ENCODE measurements at regions of chr6 and their contacts with region 1.

Region 1: GRCh38 chr6:12011276-12012076 is 636 bp upstream of the HIVEP1 start:
- DNase-seq: peak; percentile 96
- H3K4me3 ChIP-seq: peak overlapping the region in 1 of 3 experiments; percentile 71
- H3K27ac ChIP-seq: peak overlapping the region; percentile 98
- H3K4me1 ChIP-seq: peaks cover 38% of the 10 kb centered on the region
- H3K27me3 ChIP-seq: no peaks in the 10 kb centered on the region
- CTCF ChIP-seq: no peak
- POLR2A ChIP-seq: peak; percentile 7

Region 2: GRCh38 chr6:11212625-11213024 is 798.9 kb before region 1 on chr6:
- CTCF ChIA-PET with region 1: no interaction called
- POLR2A ChIA-PET with region 1: no interaction called
- dilution Hi-C with region 1: no loop called
- intact Hi-C with region 1: loop called (anchors 10 kb)
- DNase-seq: peak; percentile 71
- H3K4me3 ChIP-seq: no peak overlapping the region
- H3K27ac ChIP-seq: peak overlapping the region; percentile 77
- H3K4me1 ChIP-seq: peaks cover 95% of the 10 kb centered on the region
- H3K27me3 ChIP-seq: no peaks in the 10 kb centered on the region
- CTCF ChIP-seq: no peak
- POLR2A ChIP-seq: no peak

Region 3: GRCh38 chr6:11609315-11610071 is 402.0 kb before region 1 on chr6:
- CTCF ChIA-PET with region 1: interaction called, 3 read pairs
- POLR2A ChIA-PET with region 1: interaction called, 10 read pairs
- dilution Hi-C with region 1: no loop called
- intact Hi-C with region 1: loop called (anchors 1 kb)
- DNase-seq: peak; percentile 99
- H3K4me3 ChIP-seq: peak overlapping the region in 2 of 3 experiments; percentile 30 to 86
- H3K27ac ChIP-seq: peak overlapping the region; percentile 99
- H3K4me1 ChIP-seq: peaks cover 78% of the 10 kb centered on the region
- H3K27me3 ChIP-seq: no peaks in the 10 kb centered on the region
- CTCF ChIP-seq: no peak
- POLR2A ChIP-seq: no peak

Region 4: DNA sequence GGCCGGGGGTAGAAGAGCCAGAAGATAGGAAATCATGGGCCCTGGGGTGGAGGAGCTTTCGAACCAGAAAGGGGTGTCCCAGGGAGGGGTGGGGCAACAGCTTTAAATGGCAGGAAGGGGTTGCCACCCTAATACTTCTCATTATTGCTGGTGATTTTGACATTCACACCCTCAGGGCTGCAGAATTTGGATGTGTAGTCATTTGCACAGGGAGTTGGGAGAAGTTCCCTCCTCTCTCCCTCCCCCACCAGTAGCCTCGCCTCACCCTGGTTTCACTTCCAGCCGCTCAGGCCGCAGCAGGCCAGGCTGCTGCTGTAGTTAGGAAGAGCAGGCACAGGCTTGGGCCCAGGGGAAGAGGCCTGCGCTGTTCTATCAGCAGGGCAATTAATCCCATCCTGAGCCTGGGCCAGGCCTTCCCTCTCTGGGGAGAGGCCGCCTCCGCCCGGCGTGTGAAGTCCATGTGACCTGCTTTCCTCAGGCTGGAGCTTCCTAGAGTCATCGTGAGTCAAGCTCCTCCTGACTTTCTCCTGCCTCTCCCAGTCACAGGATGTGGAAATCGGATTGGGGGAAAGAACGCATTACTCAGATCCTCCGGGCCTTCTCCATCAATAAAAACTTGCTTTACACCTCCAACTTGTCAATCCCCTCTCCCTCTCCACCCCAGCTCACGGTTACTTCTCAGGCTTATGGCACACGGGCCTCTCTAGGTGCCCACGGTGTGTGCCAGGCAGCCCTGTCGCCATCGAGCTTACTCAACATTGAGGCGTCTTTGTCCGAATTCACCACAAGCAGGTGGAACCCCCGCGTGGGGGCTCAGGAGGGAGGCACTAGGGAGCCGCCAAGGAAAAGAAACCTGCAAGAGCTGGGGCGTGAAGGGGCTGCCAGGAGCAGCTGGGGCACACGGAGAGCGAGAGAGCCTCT is 240.7 kb before region 1 on chr6:
- CTCF ChIA-PET with region 1: interaction called, 3 read pairs
- POLR2A ChIA-PET with region 1: interaction called, 3 read pairs
- dilution Hi-C with region 1: no loop called
- intact Hi-C with region 1: loop called (anchors 1 kb)
- DNase-seq: peak; percentile 93
- H3K4me3 ChIP-seq: no peak overlapping the region
- H3K27ac ChIP-seq: peak overlapping the region; percentile 94
- H3K4me1 ChIP-seq: peaks cover 58% of the 10 kb centered on the region
- H3K27me3 ChIP-seq: no peaks in the 10 kb centered on the region
- CTCF ChIP-seq: no peak
- POLR2A ChIP-seq: peak; percentile 84

Region 5: DNA sequence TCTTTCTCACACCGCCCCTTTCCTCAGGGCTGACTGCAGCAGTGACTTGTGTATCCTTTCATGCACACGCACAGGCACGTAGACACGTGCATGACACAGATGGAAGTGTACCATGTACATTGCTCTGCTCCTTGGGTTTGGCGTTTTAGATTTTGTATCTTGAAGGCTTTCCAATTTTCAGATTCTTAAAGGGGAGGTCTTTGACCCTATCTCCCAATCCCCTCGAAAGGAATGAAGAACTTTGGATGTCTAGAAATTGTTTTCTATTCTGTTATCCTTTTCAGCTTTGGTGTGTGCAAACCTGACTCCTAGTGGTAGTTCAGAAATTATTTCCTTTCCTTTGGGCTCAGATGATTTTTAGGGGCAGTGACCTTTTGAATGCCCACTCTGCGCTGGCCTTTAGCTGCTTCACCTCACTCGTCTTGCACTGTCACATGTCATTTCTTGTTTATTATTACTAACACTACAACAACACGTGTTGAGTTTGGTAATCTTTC is 63.6 kb after region 1 on chr6:
- CTCF ChIA-PET with region 1: interaction called, 12 read pairs
- POLR2A ChIA-PET with region 1: no interaction called
- dilution Hi-C with region 1: no loop called
- intact Hi-C with region 1: loop called (anchors 1 kb)
- DNase-seq: peak; percentile 34
- H3K4me3 ChIP-seq: no peak overlapping the region
- H3K27ac ChIP-seq: no peak overlapping the region
- H3K4me1 ChIP-seq: peaks cover 22% of the 10 kb centered on the region
- H3K27me3 ChIP-seq: no peaks in the 10 kb centered on the region
- CTCF ChIP-seq: peak; percentile 13 to 18
- POLR2A ChIP-seq: no peak

Region 6: DNA sequence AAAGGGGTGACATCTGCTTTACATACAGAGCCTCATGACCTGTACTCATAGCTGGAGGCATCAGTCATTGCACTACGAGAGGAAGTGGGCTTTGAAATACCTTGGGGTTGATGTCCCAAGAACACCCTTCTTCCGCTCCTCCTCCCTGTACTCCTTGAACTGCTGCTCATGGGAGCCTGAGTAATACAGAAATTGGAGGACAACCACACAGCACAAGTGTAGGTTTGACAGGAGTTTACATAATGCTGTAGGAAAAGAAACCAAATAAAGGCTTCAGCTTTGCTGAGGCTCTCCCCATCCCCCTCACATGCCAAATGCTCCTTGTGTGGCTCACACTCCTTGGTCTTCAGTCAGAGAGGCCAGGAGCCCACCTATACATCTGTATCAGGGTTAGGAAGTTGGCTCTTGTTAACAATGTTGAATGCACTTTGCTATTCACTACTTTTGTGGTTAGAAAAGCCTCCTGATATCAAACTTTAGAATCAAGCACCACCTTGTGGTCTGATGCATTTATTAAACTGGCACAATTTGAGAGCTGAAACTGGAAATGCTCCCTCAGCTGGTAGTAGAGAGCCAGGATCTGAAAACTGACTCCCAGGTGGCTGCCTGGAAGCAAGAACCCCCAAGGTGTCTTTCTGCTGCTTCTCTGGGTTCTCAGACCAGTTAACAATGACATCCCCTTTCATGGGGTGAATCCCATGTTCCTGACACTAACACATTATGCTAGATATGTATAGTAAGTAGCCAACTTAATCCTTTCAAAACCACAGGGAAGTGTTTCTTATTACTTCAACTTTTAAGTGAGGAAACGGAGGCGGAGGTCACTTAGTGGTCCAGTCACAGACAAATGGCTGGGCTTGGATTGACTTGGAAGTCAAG is 222.5 kb after region 1 on chr6:
- CTCF ChIA-PET with region 1: interaction called, 28 read pairs
- POLR2A ChIA-PET with region 1: no interaction called
- dilution Hi-C with region 1: no loop called
- intact Hi-C with region 1: loop called (anchors 2 kb)
- DNase-seq: peak; percentile 86
- H3K4me3 ChIP-seq: no peak overlapping the region
- H3K27ac ChIP-seq: no peak overlapping the region
- H3K4me1 ChIP-seq: no peaks in the 10 kb centered on the region
- H3K27me3 ChIP-seq: no peaks in the 10 kb centered on the region
- CTCF ChIP-seq: peak; percentile 59 to 73
- POLR2A ChIP-seq: no peak